SK-N-SH (cell line): ENCODE measurements at regions of chr19 and their contacts with region 1.

Region 1: DNA sequence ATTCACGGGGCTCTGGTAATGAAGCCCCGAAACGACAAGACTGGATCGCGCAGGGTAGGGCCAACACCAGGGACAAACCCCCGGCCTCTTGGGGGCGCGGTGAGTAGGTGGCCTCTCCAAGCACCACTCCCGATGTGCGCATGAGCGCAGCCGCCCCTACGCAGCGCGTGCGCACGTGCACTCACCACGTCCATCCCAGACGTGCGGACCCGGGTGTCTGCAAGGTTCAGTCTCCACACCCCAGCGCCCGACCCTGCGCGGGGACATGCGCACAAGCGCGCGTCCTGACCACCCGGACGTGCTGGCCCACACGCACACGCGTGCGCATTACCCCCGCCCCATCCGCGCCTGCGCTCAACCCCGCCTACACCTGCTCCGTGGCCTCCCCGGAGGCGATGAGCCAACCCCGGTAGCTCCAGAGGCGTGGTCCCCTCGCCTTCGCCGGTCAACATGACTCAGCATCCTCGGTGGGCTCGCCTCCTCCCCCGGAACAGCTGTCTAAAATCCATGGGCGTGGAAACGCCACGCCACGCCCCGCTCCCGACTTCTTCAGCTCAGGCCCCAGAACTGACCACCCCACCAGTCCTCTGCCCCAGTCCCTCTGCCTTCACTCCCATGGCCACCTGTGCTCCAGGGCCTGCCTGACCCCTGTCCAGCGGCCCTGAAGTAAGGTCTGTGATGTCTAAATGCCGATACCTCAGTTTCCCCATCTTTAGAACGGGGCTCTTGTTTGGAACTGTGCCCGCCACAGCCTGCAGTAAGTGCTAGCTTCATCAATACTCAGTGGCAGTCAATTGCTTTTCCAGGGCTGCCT is 5.6 kb upstream of the GPI start:
- DNase-seq: peak; percentile 98
- H3K4me3 ChIP-seq: peak overlapping the region; percentile 46 to 51
- H3K27ac ChIP-seq: peak overlapping the region; percentile 36 to 90
- H3K4me1 ChIP-seq: peaks cover 11 to 17% of the 10 kb centered on the region in 2 experiments; a peak in 2 of 4 replicates
- H3K27me3 ChIP-seq: no peaks in the 10 kb centered on the region
- CTCF ChIP-seq: peak; percentile 67
- EP300 ChIP-seq: no peak
- RAD21 ChIP-seq: peak; percentile 35

Region 2: GRCh38 chr19:34317311-34317927 is 41.9 kb before region 1 on chr19:
- CTCF ChIA-PET with region 1: no interaction called
- POLR2A ChIA-PET with region 1: no interaction called
- DNase-seq: no peak
- H3K4me3 ChIP-seq: no peak overlapping the region
- H3K27ac ChIP-seq: no peak overlapping the region
- H3K4me1 ChIP-seq: peaks cover 0 to 22% of the 10 kb centered on the region in 2 experiments; a peak in 1 of 4 replicates
- H3K27me3 ChIP-seq: no peaks in the 10 kb centered on the region
- CTCF ChIP-seq: no peak
- EP300 ChIP-seq: no peak
- RAD21 ChIP-seq: no peak

Region 3: DNA sequence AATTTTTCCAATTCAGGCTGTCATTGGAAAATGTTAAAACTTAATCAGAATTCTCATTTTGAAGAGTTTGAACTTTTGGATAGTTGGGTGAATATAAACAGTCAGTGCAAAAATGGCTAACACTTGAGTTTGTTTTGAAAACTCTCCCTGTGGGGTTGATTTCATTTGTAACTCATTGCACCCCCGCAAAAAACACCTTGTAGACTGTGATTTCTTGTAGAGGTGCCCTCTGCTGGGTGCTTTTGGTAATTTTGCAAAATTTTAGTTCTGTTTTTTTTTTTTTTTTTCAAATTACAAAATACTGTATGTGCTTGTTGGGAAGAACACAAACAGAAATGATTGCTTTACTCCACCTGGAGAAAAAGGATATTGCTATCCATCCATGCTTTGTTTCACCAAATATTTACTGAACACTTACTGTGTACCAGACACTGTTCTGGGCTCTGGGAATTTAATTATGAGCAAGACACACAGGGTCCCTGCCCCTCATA is 22.5 kb before region 1 on chr19:
- CTCF ChIA-PET with region 1: interaction called, 11 read pairs
- POLR2A ChIA-PET with region 1: no interaction called
- DNase-seq: peak; percentile 52
- H3K4me3 ChIP-seq: peak overlapping the region in 1 of 2 experiments; percentile 9; a peak in 1 of 4 replicates
- H3K27ac ChIP-seq: no peak overlapping the region
- H3K4me1 ChIP-seq: peaks cover 0 to 3% of the 10 kb centered on the region in 2 experiments; a peak in 2 of 4 replicates
- H3K27me3 ChIP-seq: no peaks in the 10 kb centered on the region
- CTCF ChIP-seq: peak; percentile 84
- EP300 ChIP-seq: no peak
- RAD21 ChIP-seq: peak; percentile 53

Region 4: DNA sequence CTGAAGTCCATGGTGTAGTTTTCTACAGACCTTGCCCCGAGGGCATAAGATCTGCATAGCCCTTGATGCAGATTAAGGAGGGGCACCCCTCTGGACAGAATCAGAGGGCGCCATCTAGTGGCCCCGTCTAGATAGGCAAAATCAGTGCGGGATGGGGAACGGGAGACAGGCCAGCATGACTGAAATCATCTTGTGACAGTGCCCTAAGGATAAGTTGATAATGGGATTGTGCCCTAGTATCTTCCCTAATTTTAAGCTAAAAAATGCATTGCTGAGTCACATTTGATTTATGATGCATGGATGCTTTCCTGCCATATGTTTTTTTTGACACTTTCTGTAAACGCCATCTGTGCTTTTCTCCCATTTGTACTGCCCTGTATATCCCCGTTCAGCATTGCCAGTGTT is 13.4 kb before region 1 on chr19:
- CTCF ChIA-PET with region 1: interaction called, 13 read pairs
- POLR2A ChIA-PET with region 1: no interaction called
- DNase-seq: peak; percentile 86
- H3K4me3 ChIP-seq: peak overlapping the region in 1 of 2 experiments; percentile 38; a peak in 1 of 4 replicates
- H3K27ac ChIP-seq: no peak overlapping the region
- H3K4me1 ChIP-seq: no peaks in the 10 kb centered on the region
- H3K27me3 ChIP-seq: no peaks in the 10 kb centered on the region
- CTCF ChIP-seq: peak; percentile 88
- EP300 ChIP-seq: no peak
- RAD21 ChIP-seq: peak; percentile 57